ENCODE measurements at regions of chr10 and their contacts with region 1.

Region 1: DNA sequence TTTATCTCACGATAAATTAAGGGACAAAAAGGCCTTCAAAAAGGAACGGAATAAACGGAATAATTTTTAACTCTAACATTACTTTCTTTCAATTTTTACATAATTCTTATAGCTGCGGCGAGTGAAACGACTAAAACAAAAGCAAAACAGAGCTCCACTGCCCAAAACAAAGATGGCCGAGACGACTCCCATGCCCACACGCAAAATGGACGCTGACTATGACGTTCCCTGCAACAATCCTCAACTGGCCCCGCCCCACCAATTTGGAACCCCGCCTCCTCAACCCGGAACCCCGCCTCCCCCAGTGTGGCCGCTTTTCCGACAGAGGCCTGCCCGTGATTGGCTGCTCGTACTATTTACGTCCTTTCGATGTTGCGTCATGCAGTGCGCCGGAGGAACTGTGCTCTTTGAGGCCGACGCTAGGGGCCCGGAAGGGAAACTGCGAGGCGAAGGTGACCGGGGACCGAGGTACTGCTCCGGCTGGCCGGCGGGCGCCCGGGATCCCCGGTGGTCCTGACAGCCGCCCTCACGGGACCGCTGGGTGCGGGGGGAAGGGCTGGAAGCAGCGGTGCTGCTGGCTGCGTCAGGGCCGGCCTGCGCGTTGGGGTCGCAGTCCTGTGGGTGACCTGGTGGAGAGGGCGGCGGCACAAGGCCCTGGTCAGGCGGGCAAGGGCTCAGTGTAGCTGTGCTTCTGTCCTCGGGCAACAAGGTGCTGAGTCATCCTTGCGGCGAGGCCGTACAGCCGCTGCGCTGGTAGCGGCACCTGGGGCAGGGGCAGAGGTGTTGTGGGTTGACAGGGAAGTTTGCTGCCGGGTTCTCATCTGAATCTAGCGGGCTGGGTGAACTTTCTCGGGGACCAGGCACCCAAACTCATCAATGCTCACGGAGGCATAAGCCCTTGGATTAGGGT is at the start of gene GHITM:
- DNase-seq: peak; percentile 98
- ATAC-seq: peak; percentile 96
- H3K4me3 Mint-ChIP-seq: peak within 1 kb of the TSS; percentile 96
- H3K27ac Mint-ChIP-seq: peak within 1 kb of the TSS; percentile 94
- H3K4me1 Mint-ChIP-seq: peaks cover 32% of the 10 kb centered on the region
- H3K27me3 Mint-ChIP-seq: no peaks in the 10 kb centered on the region
- CTCF ChIP-seq: no peak
- total RNA-seq, gene GHITM: 113 and 114 TPM in 2 replicates

Region 2: DNA sequence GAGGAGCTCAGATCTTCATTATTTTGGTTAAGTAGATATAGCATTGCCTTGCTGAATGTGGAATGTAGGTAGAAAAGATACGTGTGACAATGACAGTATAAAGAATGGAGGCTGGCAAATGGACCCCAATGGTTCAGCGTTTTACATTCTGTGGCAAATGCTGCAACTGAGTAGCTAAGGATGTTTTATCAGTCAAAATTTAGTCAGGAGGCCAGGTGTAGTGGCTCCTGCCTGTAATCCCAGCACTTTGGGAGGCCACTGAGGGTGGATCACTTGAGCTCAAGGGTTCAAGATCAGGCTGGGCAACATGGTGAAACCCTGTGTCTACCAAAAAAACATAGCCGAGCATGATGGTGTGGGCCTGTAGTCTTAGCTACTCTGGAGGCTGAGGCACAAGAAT is 120.6 kb before region 1 on chr10:
- CTCF ChIA-PET with region 1: no interaction called
- POLR2A ChIA-PET with region 1: no interaction called
- intact Hi-C with region 1: no loop called
- DNase-seq: no peak
- ATAC-seq: no peak
- H3K4me3 Mint-ChIP-seq: no peak overlapping the region
- H3K27ac Mint-ChIP-seq: no peak overlapping the region
- H3K4me1 Mint-ChIP-seq: no peaks in the 10 kb centered on the region
- H3K27me3 Mint-ChIP-seq: peaks cover 8% of the 10 kb centered on the region
- CTCF ChIP-seq: no peak

Region 3: DNA sequence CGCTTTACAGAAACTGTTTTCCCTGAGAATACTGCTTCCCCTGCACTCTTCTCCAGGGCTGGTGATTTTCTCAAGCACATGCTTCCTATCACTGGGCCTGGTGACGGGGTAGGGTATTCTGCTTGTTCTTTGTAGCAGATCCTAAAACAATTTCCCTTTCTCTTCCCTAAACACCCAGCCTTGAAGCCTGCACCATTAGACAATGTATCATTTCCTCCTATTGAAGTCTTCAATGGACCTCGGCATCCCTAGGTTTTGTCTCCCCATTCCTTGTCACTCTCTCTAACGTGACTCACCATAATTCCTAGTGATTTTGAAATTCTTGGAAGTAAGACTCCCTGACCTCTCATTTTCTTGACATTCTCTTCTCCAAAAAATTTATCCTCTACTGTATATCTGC is 109.5 kb before region 1 on chr10:
- CTCF ChIA-PET with region 1: no interaction called
- POLR2A ChIA-PET with region 1: no interaction called
- intact Hi-C with region 1: no loop called
- DNase-seq: no peak
- ATAC-seq: no peak
- H3K4me3 Mint-ChIP-seq: no peak overlapping the region
- H3K27ac Mint-ChIP-seq: no peak overlapping the region
- H3K4me1 Mint-ChIP-seq: no peaks in the 10 kb centered on the region
- H3K27me3 Mint-ChIP-seq: no peaks in the 10 kb centered on the region
- CTCF ChIP-seq: no peak

Region 4: GRCh38 chr10:84156768-84157167 is 17.4 kb after region 1 on chr10:
- CTCF ChIA-PET with region 1: no interaction called
- POLR2A ChIA-PET with region 1: no interaction called
- intact Hi-C with region 1: loop called (anchors 1 kb)
- DNase-seq: no peak
- ATAC-seq: peak; percentile 94
- H3K4me3 Mint-ChIP-seq: no peak overlapping the region
- H3K27ac Mint-ChIP-seq: peak overlapping the region; percentile 21
- H3K4me1 Mint-ChIP-seq: peaks cover 18% of the 10 kb centered on the region
- H3K27me3 Mint-ChIP-seq: peaks cover 2% of the 10 kb centered on the region
- CTCF ChIP-seq: no peak

Region 5: DNA sequence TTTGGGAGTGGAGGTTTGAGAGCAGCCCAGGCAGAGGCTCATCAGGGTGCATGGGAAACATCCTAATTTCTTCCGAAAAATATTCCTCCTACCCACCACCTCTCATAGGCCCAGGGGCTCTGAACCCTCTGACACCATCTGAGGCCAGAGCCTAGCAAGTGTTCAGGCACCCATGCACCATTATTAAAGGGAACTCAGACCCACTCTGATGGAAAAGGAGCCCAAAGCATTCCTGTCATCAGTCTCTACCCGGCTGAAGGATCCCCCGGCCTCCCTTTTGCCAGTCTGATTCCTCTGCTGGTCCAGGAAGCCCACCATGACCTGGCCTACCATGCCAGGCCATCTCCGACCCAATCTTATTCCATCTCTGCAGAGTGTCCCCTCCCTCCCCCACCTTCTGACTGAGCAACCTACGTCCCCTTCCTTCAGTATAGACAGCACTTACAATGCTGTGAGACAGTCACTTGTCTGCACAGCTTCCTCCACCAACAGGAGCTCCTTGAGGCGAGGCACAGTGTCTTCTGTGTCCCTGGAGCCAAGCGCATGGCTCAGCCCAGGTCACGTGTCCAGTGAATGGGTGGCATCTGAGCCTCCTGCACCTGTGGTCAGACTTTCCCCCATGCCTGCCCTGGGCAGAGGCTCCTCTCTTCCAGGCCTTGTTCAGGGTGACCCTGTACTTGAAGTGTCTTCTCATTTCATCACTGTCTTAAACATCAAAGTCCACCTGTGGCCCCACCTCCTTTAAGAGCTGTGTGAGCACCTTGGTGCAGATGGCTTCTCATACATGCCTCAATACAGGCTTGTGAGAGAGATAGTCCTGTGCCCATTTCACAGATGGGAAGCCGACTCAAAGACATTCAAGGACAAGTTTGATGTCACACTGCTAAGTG is 33.3 kb after region 1 on chr10:
- CTCF ChIA-PET with region 1: no interaction called
- POLR2A ChIA-PET with region 1: interaction called, 6 read pairs
- intact Hi-C with region 1: loop called (anchors 1 kb)
- DNase-seq: no peak
- ATAC-seq: peak; percentile 65
- H3K4me3 Mint-ChIP-seq: peak overlapping the region; percentile 76
- H3K27ac Mint-ChIP-seq: peak overlapping the region; percentile 90
- H3K4me1 Mint-ChIP-seq: peaks cover 33% of the 10 kb centered on the region
- H3K27me3 Mint-ChIP-seq: no peaks in the 10 kb centered on the region
- CTCF ChIP-seq: no peak

Region 6: GRCh38 chr10:84179059-84179710 is 39.8 kb after region 1 on chr10:
- CTCF ChIA-PET with region 1: no interaction called
- POLR2A ChIA-PET with region 1: interaction called, 3 read pairs
- intact Hi-C with region 1: loop called (anchors 1 kb)
- DNase-seq: peak; percentile 34
- ATAC-seq: peak; percentile 90
- H3K4me3 Mint-ChIP-seq: no peak overlapping the region
- H3K27ac Mint-ChIP-seq: no peak overlapping the region
- H3K4me1 Mint-ChIP-seq: peaks cover 6% of the 10 kb centered on the region
- H3K27me3 Mint-ChIP-seq: no peaks in the 10 kb centered on the region
- CTCF ChIP-seq: no peak

Region 7: GRCh38 chr10:84328418-84329195 is 189.2 kb after region 1 on chr10 and contains the start of gene CCSER2:
- CTCF ChIA-PET with region 1: no interaction called
- POLR2A ChIA-PET with region 1: interaction called, 9 read pairs
- intact Hi-C with region 1: loop called (anchors 1 kb)
- DNase-seq: peak; percentile 98
- ATAC-seq: peak; percentile 83
- H3K4me3 Mint-ChIP-seq: peak within 1 kb of the TSS; percentile 92
- H3K27ac Mint-ChIP-seq: peak within 1 kb of the TSS; percentile 95
- H3K4me1 Mint-ChIP-seq: peaks cover 32% of the 10 kb centered on the region
- H3K27me3 Mint-ChIP-seq: no peaks in the 10 kb centered on the region
- CTCF ChIP-seq: no peak
- total RNA-seq, gene CCSER2: 52.4 and 57.1 TPM in 2 replicates

Measured in activated B cell treated with CpG ODN at 0.5 μM for 24 hours (primary cell).